A549 (cell line): ENCODE measurements at regions of chr17 and their contacts with region 1.

Region 1: DNA sequence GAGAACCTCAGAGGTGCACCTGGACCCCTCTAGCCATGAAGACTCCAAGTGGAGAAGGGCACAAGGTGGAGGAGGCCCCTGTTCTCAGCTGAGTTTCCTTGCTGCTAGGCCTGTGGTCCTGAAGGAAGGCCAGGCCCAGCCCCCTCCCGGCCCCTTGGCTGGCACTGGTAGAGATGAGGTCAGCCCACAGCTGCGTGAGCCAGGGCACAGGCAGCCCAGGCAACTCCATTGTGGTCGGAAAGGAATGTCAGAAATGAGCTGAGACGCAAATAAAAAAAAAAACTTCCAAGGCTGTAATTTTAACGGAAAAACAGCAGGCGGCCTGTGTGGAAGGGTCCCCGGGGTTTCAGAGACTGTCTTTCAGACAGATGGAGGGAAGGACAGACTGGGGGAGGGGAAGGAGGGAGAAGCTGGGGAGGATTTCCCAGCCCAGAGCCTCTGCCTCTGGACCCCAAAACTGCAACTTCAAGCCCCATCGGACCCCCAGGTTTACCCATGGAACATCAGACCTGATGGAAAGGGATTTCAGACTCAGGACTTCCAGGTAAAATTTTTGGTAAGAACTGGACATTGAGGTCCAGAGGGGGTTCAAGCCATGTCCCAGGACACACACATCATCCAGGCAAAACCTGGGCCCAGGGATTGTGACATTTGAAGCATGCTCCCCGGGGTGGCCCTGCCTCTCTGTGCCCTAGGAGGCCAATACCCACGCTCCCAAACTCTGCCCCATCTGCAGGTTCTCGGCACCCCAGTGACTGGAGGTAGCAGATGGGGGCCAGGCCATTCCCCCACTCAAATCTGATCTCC is 25.7 kb upstream of the MRPS23 start:
- DNase-seq: peak; percentile 96 to 98
- ATAC-seq: peak; percentile 83 to 88
- H3K4me3 ChIP-seq: peak overlapping the region; percentile 7; the same call in 1 of the 3 replicates
- H3K27ac ChIP-seq: peak overlapping the region; percentile 92 to 95
- H3K4me1 ChIP-seq: peaks cover 95% of the 10 kb centered on the region
- CTCF ChIP-seq: peak; percentile 54; the same call in 2 of the 3 replicates
- EP300 ChIP-seq: peak; percentile 73 to 92; a peak in 3 of 5 replicates
- POLR2A ChIP-seq: no peak
- RAD21 ChIP-seq: peak; percentile 72 to 86

Region 2: GRCh38 chr17:57965521-57966160 is 90.1 kb after region 1 on chr17:
- CTCF ChIA-PET with region 1: interaction called, 16 read pairs
- POLR2A ChIA-PET with region 1: no interaction called
- DNase-seq: no peak
- ATAC-seq: no peak
- H3K4me3 ChIP-seq: no peak overlapping the region
- H3K27ac ChIP-seq: no peak overlapping the region
- H3K4me1 ChIP-seq: peaks cover 16% of the 10 kb centered on the region
- CTCF ChIP-seq: no peak
- EP300 ChIP-seq: no peak
- POLR2A ChIP-seq: no peak
- RAD21 ChIP-seq: no peak

Region 3: DNA sequence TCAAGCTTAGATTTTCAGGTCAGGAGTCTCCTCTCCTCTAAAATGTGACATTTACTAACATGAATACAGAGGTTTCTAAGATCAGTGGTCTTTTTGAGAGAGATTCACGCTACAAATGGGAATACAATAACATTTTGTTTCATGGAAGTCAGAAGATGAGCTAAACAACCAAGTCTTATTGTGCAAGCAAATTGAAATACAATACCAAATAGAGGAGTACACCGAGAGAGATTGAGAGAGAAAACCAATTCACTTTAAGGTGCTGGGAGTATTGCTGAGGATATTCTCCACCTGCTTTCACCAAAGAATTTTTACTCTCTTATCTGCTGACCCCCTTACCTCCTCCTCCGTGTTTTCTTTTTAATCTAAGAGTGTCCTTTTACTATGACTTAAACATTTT is 101.1 kb after region 1 on chr17:
- CTCF ChIA-PET with region 1: interaction called, 10 read pairs
- POLR2A ChIA-PET with region 1: no interaction called
- DNase-seq: no peak
- ATAC-seq: no peak
- H3K4me3 ChIP-seq: no peak overlapping the region
- H3K27ac ChIP-seq: peak overlapping the region in 1 of 2 experiments; percentile 31; a peak in 2 of 6 replicates
- H3K4me1 ChIP-seq: peaks cover 57% of the 10 kb centered on the region
- CTCF ChIP-seq: no peak
- EP300 ChIP-seq: no peak
- POLR2A ChIP-seq: no peak
- RAD21 ChIP-seq: no peak

Region 4: DNA sequence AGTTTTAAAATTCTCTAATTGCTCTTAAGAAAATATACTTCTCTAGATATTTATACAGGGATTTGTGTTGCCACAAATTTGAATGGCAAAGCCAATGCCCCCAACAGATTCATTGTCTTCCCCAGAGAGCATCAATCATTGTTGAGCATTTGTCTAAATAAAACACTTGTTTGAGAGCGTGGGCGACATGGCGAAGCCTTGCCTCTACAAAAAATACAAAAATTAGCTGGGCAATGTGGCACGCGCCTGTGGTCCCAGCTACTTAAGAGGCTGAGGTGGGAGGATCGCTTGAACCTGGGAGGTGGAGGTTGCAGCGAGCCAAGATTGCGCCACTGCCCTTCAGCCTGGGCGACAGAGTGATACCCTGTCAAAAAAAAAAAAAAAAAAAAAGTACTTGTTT is 144.9 kb after region 1 on chr17:
- CTCF ChIA-PET with region 1: no interaction called
- POLR2A ChIA-PET with region 1: no interaction called
- DNase-seq: no peak
- ATAC-seq: no peak
- H3K4me3 ChIP-seq: no peak overlapping the region
- H3K27ac ChIP-seq: no peak overlapping the region
- H3K4me1 ChIP-seq: no peaks in the 10 kb centered on the region
- CTCF ChIP-seq: no peak
- EP300 ChIP-seq: no peak
- POLR2A ChIP-seq: no peak
- RAD21 ChIP-seq: no peak

Region 5: DNA sequence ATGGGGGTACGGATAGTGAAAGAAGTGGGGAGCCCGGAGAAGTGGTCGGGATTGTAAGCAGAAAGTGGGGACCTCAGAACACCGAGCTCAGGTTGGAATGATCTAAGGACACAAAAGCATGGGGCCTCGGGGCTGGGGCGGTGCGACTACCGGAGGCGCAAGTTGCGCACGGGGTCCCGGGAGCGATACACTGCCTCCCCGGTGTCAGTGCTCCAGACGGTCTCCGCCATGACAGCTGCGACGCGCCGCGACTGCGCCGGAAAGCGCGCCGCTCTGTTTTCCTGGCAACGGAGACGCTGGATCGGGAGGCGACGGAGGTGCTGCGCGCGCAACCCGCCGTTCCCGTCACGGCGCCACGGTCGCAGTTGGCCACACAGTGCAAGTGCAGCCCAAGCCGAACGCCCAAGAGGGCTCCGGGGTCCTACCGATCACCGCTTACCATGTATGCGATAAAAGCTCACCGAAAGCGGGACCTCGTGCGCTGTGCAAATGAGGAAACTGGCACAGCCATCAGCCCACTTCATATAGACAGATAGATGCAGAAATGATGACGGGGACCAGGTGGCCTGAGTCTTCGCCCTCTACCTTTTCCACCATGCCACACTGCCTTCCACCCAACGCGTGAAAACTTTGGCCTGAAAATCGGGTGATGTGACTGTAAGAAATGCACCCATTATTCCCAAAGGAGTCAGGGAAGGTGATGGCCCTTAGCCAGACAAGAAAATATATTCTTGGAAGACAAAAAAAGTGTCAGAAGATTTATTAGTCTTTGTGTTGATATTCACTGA is 343.7 kb after region 1 on chr17 and contains the start of gene MKS1:
- CTCF ChIA-PET with region 1: no interaction called
- POLR2A ChIA-PET with region 1: no interaction called
- DNase-seq: peak; percentile 95 to 100
- ATAC-seq: peak; percentile 98 to 100
- H3K4me3 ChIP-seq: peak within 1 kb of the TSS; percentile 77
- H3K27ac ChIP-seq: peak within 1 kb of the TSS; percentile 85 to 89
- H3K4me1 ChIP-seq: peaks cover 9% of the 10 kb centered on the region; the same call in 2 of the 3 replicates
- CTCF ChIP-seq: peak; percentile 34; the same call in 2 of the 3 replicates
- EP300 ChIP-seq: no peak
- POLR2A ChIP-seq: peak; percentile 93
- RAD21 ChIP-seq: no peak
- polyA plus RNA-seq, gene MKS1: 18.6 and 19.0 TPM in 2 replicates